ENCODE measurements at regions of chr10 and their contacts with region 1.

Region 1: GRCh38 chr10:110600487-110601101 is 33.1 kb downstream of the SMC3 start:
- DNase-seq: no peak
- ATAC-seq: no peak
- H3K4me3 ChIP-seq: no peak overlapping the region
- H3K27ac ChIP-seq: no peak overlapping the region
- H3K4me1 ChIP-seq: no peaks in the 10 kb centered on the region
- H3K27me3 ChIP-seq: no peaks in the 10 kb centered on the region
- CTCF ChIP-seq: peak in 7 of 9 donors; percentile 34 to 58 (median 50)

Region 2: GRCh38 chr10:110556969-110557601 is 43.5 kb before region 1 on chr10:
- intact Hi-C with region 1: no loop called
- DNase-seq: peak in 1 of 2 donors; percentile 25
- ATAC-seq: peak in 2 of 8 donors; percentile 52 to 62
- H3K4me3 ChIP-seq: no peak overlapping the region
- H3K27ac ChIP-seq: no peak overlapping the region
- H3K4me1 ChIP-seq: no peaks in the 10 kb centered on the region
- H3K27me3 ChIP-seq: peaks cover 0 to 4% (median 0%) of the 10 kb centered on the region in 7 donors
- CTCF ChIP-seq: peak; percentile 36 to 79 (median 71)

Region 3: GRCh38 chr10:110883924-110884323 is 283.3 kb after region 1 on chr10:
- intact Hi-C with region 1: loop called in 1 of 10 experiments (anchors 10 kb)
- DNase-seq: no peak
- ATAC-seq: no peak
- H3K4me3 ChIP-seq: no peak overlapping the region
- H3K27ac ChIP-seq: no peak overlapping the region
- H3K4me1 ChIP-seq: peaks cover 0 to 27% (median 12%) of the 10 kb centered on the region in 9 donors
- H3K27me3 ChIP-seq: no peaks in the 10 kb centered on the region
- CTCF ChIP-seq: no peak

Region 4: DNA sequence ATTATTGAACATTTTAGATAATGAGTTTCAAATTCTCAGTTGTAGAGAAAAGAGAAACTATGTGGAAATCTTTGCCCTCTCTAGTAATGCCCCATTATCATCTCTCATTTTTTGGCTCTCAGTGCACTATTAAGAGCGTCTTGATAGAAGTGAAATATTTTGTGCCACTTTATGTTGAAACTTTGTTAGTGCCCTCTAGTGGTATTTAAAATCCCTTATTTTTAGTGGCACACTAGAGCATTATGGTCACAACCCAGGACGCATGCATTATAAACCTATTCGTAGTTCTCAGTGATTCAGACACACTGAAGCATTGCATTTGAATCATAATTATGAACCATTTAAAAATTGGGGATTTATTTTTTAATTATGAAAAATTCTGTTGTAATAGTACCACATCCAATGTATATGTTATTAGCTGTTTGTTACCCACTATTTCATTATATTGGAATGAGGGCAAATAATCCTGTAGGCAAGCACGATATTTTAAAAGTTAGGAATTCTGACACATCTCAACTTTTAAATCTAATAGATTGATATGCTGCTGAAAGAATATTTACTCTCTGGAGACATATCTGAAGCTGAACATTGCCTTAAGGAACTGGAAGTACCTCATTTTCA is 293.1 kb after region 1 on chr10:
- intact Hi-C with region 1: loop called in 4 of 10 experiments (anchors 5 to 10 kb)
- DNase-seq: no peak
- ATAC-seq: peak; percentile 69 to 88 (median 82)
- H3K4me3 ChIP-seq: no peak overlapping the region
- H3K27ac ChIP-seq: no peak overlapping the region
- H3K4me1 ChIP-seq: peaks cover 0 to 18% (median 5%) of the 10 kb centered on the region in 9 donors
- H3K27me3 ChIP-seq: no peaks in the 10 kb centered on the region
- CTCF ChIP-seq: peak; percentile 31 to 76 (median 61)